ENCODE measurements at regions of chr15 and their contacts with region 1.

Region 1: DNA sequence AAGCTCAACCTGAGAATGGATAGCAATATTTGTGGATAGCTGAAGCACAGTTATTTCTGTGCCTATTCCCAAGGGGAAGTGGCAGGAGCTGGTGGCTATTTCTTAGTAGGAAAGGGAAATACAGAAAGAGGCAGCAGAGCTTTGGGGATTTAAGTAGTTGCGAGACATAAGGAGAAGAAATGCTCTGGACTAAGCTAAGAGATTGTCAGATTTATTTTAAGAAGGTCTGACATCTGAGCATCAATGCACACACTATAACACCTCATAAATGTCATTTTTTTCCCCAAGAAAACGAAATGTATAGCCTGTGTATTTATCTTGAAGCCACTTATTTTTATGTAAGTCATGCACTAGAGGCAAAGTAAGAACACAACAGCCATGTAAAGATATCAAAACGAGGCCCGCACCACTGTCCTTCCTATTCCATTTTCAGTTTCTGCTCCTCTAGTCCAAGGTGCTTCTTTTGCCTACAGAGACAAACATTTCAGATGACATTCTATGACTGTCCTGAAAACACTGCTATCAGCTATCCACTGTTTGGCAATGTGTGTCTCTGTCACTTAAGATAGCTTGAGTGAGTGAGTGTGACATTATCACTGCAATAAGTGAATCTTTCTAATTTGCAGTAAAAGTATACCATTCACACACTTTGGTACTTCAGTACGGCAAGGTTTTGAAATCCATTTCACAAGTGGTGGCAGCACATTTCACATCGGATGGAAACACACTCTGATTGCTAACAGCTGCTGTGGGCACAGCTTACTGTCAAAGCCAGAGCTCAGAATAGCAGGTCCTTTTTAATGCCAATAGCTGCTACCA is 62.7 kb upstream of the ICE2 start:
- DNase-seq: no peak
- H3K4me3 Mint-ChIP-seq: peak overlapping the region; percentile 4
- H3K27ac Mint-ChIP-seq: peak overlapping the region; percentile 83
- H3K4me1 Mint-ChIP-seq: peaks cover 95% of the 10 kb centered on the region
- H3K27me3 Mint-ChIP-seq: no peaks in the 10 kb centered on the region

Region 2: GRCh38 chr15:60326824-60327654 is 214.7 kb before region 1 on chr15:
- CTCF ChIA-PET with region 1: no interaction called
- POLR2A ChIA-PET with region 1: no interaction called
- intact Hi-C with region 1: no loop called
- DNase-seq: peak; percentile 23
- H3K4me3 Mint-ChIP-seq: no peak overlapping the region
- H3K27ac Mint-ChIP-seq: no peak overlapping the region
- H3K4me1 Mint-ChIP-seq: peaks cover 2% of the 10 kb centered on the region
- H3K27me3 Mint-ChIP-seq: peaks cover 35% of the 10 kb centered on the region

Region 3: DNA sequence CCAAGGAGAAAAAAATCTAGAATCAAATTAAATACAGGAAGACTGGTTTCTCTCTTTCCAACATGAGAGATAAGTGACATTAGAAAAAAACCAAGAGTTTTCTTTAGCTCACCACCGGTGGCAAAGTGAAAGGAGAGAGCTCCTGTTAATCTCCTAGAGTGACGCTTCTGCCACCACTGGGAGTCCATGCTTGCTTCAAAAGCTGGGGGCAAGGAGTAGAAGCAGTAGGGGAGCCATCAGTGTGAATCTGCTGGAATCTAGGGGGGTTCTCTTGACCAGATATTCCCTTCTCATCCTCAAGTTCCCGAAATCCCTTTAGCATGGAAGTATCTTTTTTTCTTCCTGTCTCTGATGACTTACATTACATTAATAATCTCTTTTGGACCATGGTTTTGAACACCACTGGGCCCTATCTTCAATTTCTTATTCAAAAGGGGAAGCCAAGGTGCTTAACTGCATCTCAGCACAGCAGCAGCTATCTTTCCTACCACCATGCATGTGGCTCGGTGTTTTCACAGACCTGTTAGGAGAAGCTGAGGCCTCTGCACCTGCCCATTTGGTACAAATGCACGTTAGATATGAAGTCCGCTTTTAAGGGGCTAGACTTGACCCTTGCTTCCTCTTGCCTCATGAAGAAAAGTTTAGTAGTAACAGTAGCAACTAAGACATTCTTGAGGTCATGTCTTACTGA is 56.2 kb before region 1 on chr15:
- CTCF ChIA-PET with region 1: no interaction called
- POLR2A ChIA-PET with region 1: no interaction called
- intact Hi-C with region 1: no loop called
- DNase-seq: no peak
- H3K4me3 Mint-ChIP-seq: no peak overlapping the region
- H3K27ac Mint-ChIP-seq: no peak overlapping the region
- H3K4me1 Mint-ChIP-seq: peaks cover 24% of the 10 kb centered on the region
- H3K27me3 Mint-ChIP-seq: no peaks in the 10 kb centered on the region

Region 4: GRCh38 chr15:60507596-60508424 is 33.9 kb before region 1 on chr15:
- CTCF ChIA-PET with region 1: interaction called, 12 read pairs
- POLR2A ChIA-PET with region 1: no interaction called
- intact Hi-C with region 1: no loop called
- DNase-seq: peak; percentile 56
- H3K4me3 Mint-ChIP-seq: no peak overlapping the region
- H3K27ac Mint-ChIP-seq: peak overlapping the region; percentile 69
- H3K4me1 Mint-ChIP-seq: peaks cover 56% of the 10 kb centered on the region
- H3K27me3 Mint-ChIP-seq: no peaks in the 10 kb centered on the region

Region 5: GRCh38 chr15:60526127-60526625 is 15.5 kb before region 1 on chr15:
- CTCF ChIA-PET with region 1: interaction called, 82 read pairs
- POLR2A ChIA-PET with region 1: interaction called, 9 read pairs
- intact Hi-C with region 1: loop called (anchors 1 kb)
- DNase-seq: peak; percentile 47
- H3K4me3 Mint-ChIP-seq: no peak overlapping the region
- H3K27ac Mint-ChIP-seq: peak overlapping the region; percentile 75
- H3K4me1 Mint-ChIP-seq: peaks cover 73% of the 10 kb centered on the region
- H3K27me3 Mint-ChIP-seq: no peaks in the 10 kb centered on the region

Region 6: DNA sequence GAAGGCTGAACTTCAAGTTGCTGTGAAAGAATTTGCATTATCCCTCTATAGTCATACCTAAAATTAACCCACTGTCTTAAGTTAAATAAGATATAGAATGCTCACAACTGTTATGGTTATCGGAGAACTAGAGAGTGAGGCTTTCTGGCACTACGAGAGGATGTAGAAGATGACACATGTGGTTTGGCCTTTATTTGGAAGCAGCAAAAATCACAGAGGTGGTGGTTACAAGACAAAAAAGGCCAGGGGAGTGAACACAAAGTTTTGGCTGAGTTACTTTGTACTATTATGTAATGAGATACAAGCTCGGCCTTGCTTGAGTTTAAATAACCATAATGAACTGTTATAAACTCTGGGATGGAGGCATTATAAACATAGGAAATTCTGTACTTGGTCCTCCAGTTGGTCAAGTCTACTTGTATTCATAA is 15.5 kb after region 1 on chr15:
- CTCF ChIA-PET with region 1: interaction called, 8 read pairs
- POLR2A ChIA-PET with region 1: interaction called, 8 read pairs
- intact Hi-C with region 1: loop called (anchors 2 kb)
- DNase-seq: no peak
- H3K4me3 Mint-ChIP-seq: peak overlapping the region; percentile 38
- H3K27ac Mint-ChIP-seq: peak overlapping the region; percentile 83
- H3K4me1 Mint-ChIP-seq: peaks cover 82% of the 10 kb centered on the region
- H3K27me3 Mint-ChIP-seq: no peaks in the 10 kb centered on the region

Region 7: DNA sequence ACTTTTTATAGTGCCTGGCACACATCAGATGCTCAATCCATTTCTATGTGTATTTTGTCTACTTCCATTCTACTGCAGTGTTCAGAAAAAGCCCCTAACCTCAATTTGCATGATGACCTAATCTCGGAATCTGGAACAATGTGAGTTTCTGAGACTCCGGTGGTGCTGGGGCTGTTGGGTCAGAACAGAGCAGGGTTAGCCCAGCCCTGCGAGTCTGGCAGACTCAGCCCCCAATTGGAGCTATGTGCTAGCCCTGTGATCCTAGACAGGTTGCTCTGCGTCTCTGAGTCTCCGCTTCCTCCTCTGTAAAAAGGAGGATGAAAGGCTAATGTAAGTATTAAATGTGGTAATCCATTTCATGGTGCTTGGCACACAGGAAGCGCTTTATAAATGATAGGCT is 32.2 kb after region 1 on chr15:
- CTCF ChIA-PET with region 1: interaction called, 3 read pairs
- POLR2A ChIA-PET with region 1: interaction called, 28 read pairs
- intact Hi-C with region 1: no loop called
- DNase-seq: peak; percentile 68
- H3K4me3 Mint-ChIP-seq: peak overlapping the region; percentile 64
- H3K27ac Mint-ChIP-seq: peak overlapping the region; percentile 85
- H3K4me1 Mint-ChIP-seq: peaks cover 88% of the 10 kb centered on the region
- H3K27me3 Mint-ChIP-seq: no peaks in the 10 kb centered on the region

Region 8: DNA sequence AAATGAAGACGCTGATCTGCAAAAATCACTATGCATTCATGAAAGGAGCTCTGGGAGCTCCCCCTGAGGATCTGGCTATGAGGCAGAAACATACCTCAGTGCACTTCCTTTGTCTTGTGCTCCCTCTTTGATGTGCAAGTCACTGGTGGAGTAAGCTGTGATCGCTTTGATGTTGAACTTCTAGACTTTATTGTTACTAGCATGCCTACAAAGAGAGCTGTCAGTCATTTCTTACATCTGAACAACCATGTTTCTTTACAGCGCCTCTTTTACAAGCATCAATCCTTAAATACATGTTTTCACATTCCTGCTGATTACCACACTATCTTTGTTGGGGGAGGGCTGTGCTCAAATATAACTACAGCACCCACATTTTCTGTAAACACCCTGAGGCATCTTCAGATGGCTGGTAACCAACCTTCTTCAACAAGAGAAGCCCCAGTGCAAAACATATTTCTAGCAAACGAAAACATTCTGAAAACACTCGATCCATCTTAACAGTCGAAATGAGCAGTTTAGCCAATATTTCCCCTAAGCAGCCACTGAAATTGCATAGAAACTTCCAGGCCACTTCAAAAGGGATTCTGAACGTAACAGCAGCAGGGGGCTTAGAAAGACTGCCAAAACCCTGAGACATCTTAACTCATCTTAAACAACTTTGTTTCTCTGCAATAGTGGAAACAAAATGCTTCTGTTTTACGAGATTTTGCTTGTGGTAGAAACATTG is 39.1 kb after region 1 on chr15:
- CTCF ChIA-PET with region 1: interaction called, 10 read pairs
- POLR2A ChIA-PET with region 1: interaction called, 28 read pairs
- intact Hi-C with region 1: loop called (anchors 1 kb)
- DNase-seq: peak; percentile 66
- H3K4me3 Mint-ChIP-seq: peak overlapping the region; percentile 70
- H3K27ac Mint-ChIP-seq: peak overlapping the region; percentile 91
- H3K4me1 Mint-ChIP-seq: peaks cover 91% of the 10 kb centered on the region
- H3K27me3 Mint-ChIP-seq: no peaks in the 10 kb centered on the region

Measured in activated CD4-positive, alpha-beta memory T cell treated with anti-CD3 and anti-CD28 coated beads for 36 hours (primary cell).